CD8-positive, alpha-beta T cell (primary cell): ENCODE measurements at regions of chr1 and their contacts with region 1.

Region 1: DNA sequence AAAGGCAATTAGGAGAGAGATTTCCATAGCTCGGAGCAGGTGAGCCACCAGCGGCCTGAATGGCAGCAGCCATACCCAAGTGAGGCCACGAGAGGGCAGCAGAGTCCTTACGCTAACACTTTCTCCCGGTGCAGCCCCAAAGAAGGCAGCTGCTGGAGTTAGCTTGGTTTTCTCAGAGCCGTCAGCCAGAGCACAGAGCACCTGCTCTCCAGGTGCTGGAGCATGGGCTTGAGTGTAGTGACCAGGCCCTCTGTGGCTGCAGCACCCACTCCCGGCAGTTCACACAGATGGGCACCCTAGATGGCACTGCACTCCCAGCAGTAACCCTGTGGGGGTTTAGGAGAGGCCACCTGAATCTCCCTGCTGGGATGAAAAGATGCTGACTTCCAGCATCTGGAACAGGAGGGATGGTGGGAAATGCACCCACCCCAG is 45.8 kb downstream of the TMCC2 start:
- DNase-seq: peak; percentile 76 to 94 (median 86)
- ATAC-seq: peak; percentile 88
- H3K4me3 ChIP-seq: peak overlapping the region in 1 of 2 experiments; percentile 44
- H3K4me3 Mint-ChIP-seq: peak overlapping the region; percentile 61
- H3K27ac ChIP-seq: no peak overlapping the region
- H3K27ac Mint-ChIP-seq: peak overlapping the region; percentile 83
- H3K4me1 ChIP-seq: peaks cover 46% of the 10 kb centered on the region
- H3K4me1 Mint-ChIP-seq: peaks cover 40% of the 10 kb centered on the region
- H3K27me3 ChIP-seq: no peaks in the 10 kb centered on the region
- H3K27me3 Mint-ChIP-seq: no peaks in the 10 kb centered on the region
- CTCF ChIP-seq: peak; percentile 95

Region 2: DNA sequence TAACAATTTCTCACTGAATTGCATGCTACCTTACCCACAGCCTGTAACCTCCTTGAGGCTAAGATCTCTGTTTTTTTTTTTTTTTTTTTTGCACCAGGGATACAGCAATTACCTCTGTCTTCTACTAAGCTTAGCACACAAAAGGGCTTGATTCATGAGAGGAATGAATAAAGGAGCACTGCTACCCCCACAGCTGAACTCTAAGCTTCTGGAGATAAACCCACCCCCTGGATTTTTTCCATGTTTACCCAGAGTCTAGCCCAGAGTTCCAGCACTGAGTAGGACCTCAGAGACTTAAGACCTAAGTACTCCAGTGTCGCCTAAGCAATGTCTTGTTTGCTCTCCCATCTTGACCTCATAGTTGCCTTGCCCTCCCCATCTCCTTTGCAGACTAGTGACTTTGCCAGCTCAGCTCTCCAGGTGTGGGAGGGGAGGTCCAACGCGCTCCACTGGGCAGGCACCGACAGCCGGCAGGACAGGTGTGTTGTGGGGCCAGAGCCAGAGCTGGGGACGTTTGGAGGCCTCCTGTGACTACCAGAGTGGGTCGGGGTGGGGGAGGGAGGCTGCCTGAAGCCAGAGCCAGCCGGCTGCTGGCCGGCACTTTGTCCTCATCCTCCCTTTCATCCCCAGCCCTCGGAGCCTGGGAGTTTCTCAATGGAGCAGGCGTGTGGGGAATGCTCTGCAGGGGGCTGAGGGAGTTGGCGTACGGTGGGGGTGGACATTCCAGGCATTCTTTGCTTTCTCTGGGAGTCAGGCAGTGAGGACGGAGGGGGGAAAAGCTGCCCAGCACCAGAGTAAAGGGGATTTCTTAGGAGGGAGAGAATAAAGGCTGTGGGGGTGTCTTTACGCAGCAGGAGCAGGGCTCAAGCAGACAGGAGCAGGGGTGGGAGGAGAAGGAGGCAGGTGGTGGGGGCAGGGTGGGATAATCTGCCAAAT is 27.6 kb after region 1 on chr1:
- CTCF ChIA-PET with region 1: interaction called, 83 read pairs
- POLR2A ChIA-PET with region 1: interaction called, 7 read pairs
- intact Hi-C with region 1: loop called in 1 of 2 experiments (anchors 2 kb)
- DNase-seq: no peak
- ATAC-seq: no peak
- H3K4me3 ChIP-seq: no peak overlapping the region
- H3K4me3 Mint-ChIP-seq: no peak overlapping the region
- H3K27ac ChIP-seq: no peak overlapping the region
- H3K27ac Mint-ChIP-seq: peak overlapping the region; percentile 41
- H3K4me1 ChIP-seq: peaks cover 32% of the 10 kb centered on the region
- H3K4me1 Mint-ChIP-seq: peaks cover 58% of the 10 kb centered on the region
- H3K27me3 ChIP-seq: no peaks in the 10 kb centered on the region
- H3K27me3 Mint-ChIP-seq: no peaks in the 10 kb centered on the region
- CTCF ChIP-seq: no peak

Region 3: GRCh38 chr1:205321164-205321958 is 47.8 kb after region 1 on chr1 and contains the start of gene NUAK2:
- CTCF ChIA-PET with region 1: interaction called, 1,393 read pairs
- POLR2A ChIA-PET with region 1: interaction called, 160 read pairs
- intact Hi-C with region 1: loop called (anchors 1 kb)
- DNase-seq: peak; percentile 56 to 92 (median 86)
- ATAC-seq: peak; percentile 88
- H3K4me3 ChIP-seq: peak within 1 kb of the TSS; percentile 73 to 99
- H3K4me3 Mint-ChIP-seq: peak within 1 kb of the TSS; percentile 98
- H3K27ac ChIP-seq: peak within 1 kb of the TSS; percentile 68 to 72
- H3K27ac Mint-ChIP-seq: peak within 1 kb of the TSS; percentile 96
- H3K4me1 ChIP-seq: peaks cover 50% of the 10 kb centered on the region
- H3K4me1 Mint-ChIP-seq: peaks cover 71% of the 10 kb centered on the region
- H3K27me3 ChIP-seq: no peaks in the 10 kb centered on the region
- H3K27me3 Mint-ChIP-seq: no peaks in the 10 kb centered on the region
- CTCF ChIP-seq: peak; percentile 32
- total RNA-seq, gene NUAK2: 17.1 to 18.3 TPM

Region 4: DNA sequence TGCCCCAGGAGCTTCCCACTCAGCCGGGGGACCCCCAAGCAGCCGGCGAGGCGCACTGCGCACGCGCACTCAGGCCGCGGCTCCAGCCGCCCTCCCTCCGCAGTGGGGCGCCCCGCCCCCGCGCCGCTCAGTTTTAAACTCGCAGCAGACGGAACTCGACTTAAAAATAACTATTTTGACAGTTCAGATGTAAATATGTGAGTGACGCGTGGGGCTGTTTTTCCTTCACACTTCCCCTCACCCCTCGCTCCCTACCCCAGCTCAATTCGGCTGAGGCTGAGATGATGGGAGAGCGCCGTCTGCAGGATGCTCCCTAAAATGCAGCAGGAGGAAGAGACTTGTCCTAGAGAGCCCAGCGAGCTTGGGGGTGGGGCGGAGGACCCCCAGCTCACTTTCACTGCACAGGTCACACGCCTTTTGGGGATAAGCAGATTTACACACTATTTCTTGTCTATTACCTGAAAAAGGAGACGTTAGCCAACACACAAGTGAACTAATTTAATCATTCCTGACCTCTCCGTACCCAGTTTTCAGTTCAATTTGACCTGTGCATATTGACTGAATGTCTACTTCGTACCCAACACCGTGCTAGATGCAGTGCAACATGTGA is 157.2 kb after region 1 on chr1:
- CTCF ChIA-PET with region 1: interaction called, 3 read pairs
- POLR2A ChIA-PET with region 1: no interaction called
- intact Hi-C with region 1: loop called in 1 of 2 experiments (anchors 2 kb)
- DNase-seq: peak; percentile 27 to 79 (median 64)
- ATAC-seq: peak; percentile 90
- H3K4me3 ChIP-seq: peak overlapping the region; percentile 26 to 37
- H3K4me3 Mint-ChIP-seq: peak overlapping the region; percentile 86
- H3K27ac ChIP-seq: no peak overlapping the region
- H3K27ac Mint-ChIP-seq: no peak overlapping the region
- H3K4me1 ChIP-seq: peaks cover 6% of the 10 kb centered on the region
- H3K4me1 Mint-ChIP-seq: peaks cover 10% of the 10 kb centered on the region
- H3K27me3 ChIP-seq: no peaks in the 10 kb centered on the region
- H3K27me3 Mint-ChIP-seq: no peaks in the 10 kb centered on the region
- CTCF ChIP-seq: peak; percentile 58